Activated naive CD8-positive, alpha-beta T cell treated with anti-CD3 and anti-CD28 coated beads, Interleukin-2, amount 10 ng/mL, durations not matched to agents 7 days and 5 days (primary cell): ENCODE measurements at regions of chr4 and their contacts with region 1.

Region 1: DNA sequence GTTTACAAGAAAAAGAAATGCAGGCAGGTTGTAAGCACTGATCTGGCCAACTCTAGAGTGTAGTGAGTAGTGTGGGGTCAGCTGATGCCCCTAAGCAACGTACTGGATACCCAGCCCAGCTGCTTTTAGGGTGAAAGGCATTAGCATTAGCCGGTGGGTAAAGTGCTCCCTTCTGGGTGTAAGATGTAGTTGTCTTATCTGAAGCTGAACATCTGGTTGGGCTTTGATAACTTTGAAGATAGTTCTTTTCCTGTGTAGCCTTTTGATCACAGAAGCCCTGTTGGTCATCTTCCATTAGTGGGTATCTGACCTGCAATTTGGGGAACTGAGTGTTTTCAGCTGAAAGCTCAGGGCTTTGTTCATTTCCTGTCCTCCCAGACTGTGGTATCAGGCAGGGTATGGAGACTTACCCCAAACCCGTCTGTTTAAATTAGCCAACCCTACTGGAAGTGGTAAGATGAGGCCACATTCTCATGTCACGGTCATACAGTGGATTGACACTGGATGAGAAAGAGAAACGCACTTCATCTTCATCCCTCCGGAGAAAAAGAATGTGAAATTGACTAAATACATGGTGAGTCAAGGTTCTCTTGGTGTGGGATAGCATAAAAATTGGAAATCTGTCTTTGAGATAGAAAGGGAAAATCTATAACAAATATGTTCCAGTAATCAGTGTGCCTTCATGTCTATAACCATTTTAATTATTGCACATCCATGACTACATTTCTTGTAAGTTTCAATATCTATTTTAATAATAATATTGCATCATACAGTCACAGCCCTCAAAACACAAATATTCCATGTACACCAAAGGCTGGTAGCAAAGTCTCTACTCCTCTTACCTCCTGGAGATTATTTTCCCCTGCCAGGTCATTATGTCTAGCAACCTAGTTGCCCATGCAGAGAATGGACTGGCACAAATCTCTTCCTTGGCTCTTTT is 8.7 kb downstream of the RHOH start:
- DNase-seq: no peak
- ATAC-seq: peak; percentile 42
- H3K4me3 Mint-ChIP-seq: peak overlapping the region; percentile 93
- H3K27ac Mint-ChIP-seq: peak overlapping the region; percentile 97
- H3K4me1 Mint-ChIP-seq: peaks cover 52% of the 10 kb centered on the region
- H3K27me3 Mint-ChIP-seq: no peaks in the 10 kb centered on the region

Region 2: DNA sequence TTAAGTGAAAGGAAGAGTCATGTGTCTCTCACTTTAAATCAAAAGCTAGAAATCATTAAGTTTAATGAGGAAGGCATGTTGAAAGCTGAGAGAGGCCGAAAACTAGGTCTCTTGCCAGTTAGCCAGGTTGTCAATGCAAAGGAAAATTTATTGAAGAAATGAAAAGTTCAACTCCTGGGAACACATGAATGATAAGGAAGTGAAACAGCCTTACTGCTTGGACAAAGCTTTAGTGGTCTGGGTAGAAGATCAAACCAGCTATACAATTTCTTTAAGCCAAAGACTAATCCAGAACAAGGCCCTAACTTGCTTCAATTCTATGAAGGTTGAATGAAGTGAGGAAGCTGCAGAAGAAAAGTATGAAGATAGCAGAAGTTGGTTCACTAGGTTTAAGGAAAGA is 16.2 kb after region 1 on chr4:
- POLR2A ChIA-PET with region 1: interaction called, 37 read pairs
- DNase-seq: no peak
- ATAC-seq: no peak
- H3K4me3 Mint-ChIP-seq: peak overlapping the region; percentile 70
- H3K27ac Mint-ChIP-seq: peak overlapping the region; percentile 82
- H3K4me1 Mint-ChIP-seq: peaks cover 77% of the 10 kb centered on the region
- H3K27me3 Mint-ChIP-seq: no peaks in the 10 kb centered on the region

Region 3: DNA sequence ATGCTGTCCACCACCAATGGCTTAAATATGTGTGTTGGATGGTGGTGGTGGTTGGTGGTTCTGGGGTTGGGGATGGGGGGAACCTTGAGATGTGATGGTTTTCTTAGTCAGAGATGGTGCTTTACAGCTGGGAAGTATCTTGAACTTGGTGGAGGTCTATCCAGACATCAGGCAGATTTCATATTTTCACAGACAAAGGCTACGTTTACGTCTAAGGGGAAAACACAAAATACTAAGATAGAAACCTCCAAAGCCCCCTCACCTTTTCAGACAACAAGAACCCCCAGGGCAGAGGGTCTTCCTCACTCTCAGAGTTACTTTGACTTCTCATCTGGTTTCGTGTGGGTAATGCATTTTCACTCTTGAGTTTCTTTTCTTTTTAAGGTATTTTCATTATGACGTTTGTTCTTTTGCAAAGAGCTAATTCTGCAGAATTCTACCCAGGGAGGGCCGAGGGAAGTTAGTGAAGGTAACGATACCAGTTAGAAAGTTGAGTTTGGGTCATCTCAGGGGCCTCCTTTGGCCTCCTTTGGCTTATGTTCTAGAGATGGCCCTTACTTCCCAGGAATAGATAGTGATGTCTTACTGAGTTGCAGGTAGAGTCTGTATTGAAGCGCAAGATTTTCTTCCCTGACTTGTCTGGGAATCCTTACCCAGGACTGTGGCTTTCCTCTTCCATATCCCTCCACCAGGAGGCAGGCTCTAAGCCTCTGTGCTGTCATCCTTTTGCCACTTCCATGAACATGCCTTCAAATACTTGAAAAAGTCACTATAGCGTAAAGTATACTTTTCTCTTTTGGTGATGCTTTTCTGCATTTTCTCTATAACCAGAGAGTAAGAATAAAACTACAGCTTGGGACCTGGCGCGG is 23.2 kb after region 1 on chr4:
- POLR2A ChIA-PET with region 1: interaction called, 65 read pairs
- DNase-seq: peak; percentile 21
- ATAC-seq: no peak
- H3K4me3 Mint-ChIP-seq: peak overlapping the region; percentile 82
- H3K27ac Mint-ChIP-seq: peak overlapping the region; percentile 94
- H3K4me1 Mint-ChIP-seq: peaks cover 86% of the 10 kb centered on the region
- H3K27me3 Mint-ChIP-seq: no peaks in the 10 kb centered on the region

Region 4: DNA sequence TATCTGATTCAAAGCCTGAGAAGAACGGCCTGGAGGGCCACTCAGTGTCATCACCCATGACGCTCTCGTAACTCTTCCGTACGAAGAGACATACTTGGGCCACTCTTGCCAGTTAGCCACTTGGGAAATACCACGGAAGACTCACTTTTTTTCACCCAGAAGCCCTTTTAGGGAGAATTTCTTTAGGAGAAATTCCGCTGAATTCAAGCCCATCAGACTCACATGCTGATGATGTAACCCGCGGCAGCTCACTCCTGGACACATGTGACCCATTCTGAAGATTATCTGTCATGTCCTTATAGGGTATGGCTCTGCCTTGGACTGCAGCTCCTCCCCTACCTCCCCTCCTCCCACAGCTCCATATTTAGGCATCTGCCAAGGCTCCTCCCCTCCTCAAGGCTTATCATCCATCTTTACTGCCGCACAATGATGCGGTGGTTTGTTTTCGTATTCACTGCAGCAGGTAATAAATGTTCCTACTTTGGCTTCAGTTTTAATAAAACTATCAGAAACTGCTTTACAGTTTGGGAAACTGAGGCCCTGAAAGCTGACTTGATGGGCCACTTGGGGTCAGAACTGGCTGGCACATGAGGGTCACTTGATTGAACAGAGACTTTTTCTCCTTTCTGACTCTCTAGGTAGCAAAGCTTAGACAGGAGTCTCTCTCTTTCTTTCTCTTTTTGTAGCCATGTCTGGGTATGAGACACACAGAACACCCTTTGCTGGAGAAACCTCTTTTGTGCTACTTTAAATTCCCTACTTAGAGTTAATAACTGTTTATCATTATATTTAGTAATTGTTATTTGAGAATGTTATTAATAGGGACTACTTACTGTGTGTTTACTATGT is 33.4 kb after region 1 on chr4:
- POLR2A ChIA-PET with region 1: interaction called, 64 read pairs
- DNase-seq: peak; percentile 60
- ATAC-seq: peak; percentile 90
- H3K4me3 Mint-ChIP-seq: peak overlapping the region; percentile 81
- H3K27ac Mint-ChIP-seq: peak overlapping the region; percentile 92
- H3K4me1 Mint-ChIP-seq: peaks cover 79% of the 10 kb centered on the region
- H3K27me3 Mint-ChIP-seq: no peaks in the 10 kb centered on the region

Region 5: GRCh38 chr4:40247350-40247749 is 41.8 kb after region 1 on chr4:
- POLR2A ChIA-PET with region 1: interaction called, 64 read pairs
- DNase-seq: peak; percentile 71
- ATAC-seq: peak; percentile 67
- H3K4me3 Mint-ChIP-seq: peak overlapping the region; percentile 91
- H3K27ac Mint-ChIP-seq: peak overlapping the region; percentile 90
- H3K4me1 Mint-ChIP-seq: peaks cover 70% of the 10 kb centered on the region
- H3K27me3 Mint-ChIP-seq: no peaks in the 10 kb centered on the region

Region 6: GRCh38 chr4:40309250-40309774 is 103.8 kb after region 1 on chr4:
- POLR2A ChIA-PET with region 1: interaction called, 132 read pairs
- DNase-seq: peak; percentile 92
- ATAC-seq: peak; percentile 61
- H3K4me3 Mint-ChIP-seq: peak overlapping the region; percentile 83
- H3K27ac Mint-ChIP-seq: peak overlapping the region; percentile 94
- H3K4me1 Mint-ChIP-seq: peaks cover 74% of the 10 kb centered on the region
- H3K27me3 Mint-ChIP-seq: no peaks in the 10 kb centered on the region

Region 7: DNA sequence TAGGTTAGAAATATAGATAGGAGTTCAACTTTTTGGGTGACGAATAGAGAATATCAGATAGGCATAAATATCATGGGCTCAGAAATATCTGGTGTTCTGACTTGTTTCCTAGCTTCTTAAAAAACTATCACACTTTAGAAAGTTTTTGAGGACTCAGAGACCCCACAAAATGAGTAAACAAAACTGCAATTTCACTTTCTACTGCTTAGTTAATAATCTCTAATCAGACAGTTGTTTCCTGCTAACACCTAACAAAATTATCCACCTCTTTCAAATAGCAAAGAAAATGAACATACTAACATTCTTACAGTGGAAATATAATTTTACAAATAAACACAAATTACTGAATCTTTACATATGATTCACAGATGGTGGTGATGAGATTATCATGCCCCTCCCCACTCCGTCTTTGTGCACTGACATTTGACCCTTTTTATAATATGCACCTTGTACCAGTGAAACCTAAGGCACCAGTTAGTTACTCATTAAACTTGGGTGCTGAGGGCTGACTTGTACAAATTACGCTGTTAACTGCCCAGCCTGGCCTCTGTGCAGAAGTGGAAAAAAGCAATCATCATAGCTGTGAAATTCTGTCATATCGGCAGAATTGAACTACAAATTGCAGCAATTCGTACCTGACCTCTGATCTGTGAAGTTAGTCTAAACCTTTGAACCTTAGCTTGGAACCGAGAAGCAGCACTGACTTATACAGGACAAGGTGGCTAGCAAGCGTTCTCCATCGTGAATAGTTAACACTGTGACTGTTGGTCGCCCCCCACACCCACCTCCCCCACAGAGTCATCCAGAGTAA is 268.3 kb after region 1 on chr4:
- POLR2A ChIA-PET with region 1: no interaction called
- DNase-seq: no peak
- ATAC-seq: no peak
- H3K4me3 Mint-ChIP-seq: no peak overlapping the region
- H3K27ac Mint-ChIP-seq: no peak overlapping the region
- H3K4me1 Mint-ChIP-seq: peaks cover 5% of the 10 kb centered on the region
- H3K27me3 Mint-ChIP-seq: peaks cover 1% of the 10 kb centered on the region